Dendritic cell treated with granulocyte-macrophage colony-stimulating factor and Interleukin-4, amounts not matched to agents 40 ng/mL and 50 ng/mL, for 4 days (primary cell): ENCODE measurements at regions of chr1 and their contacts with region 1.

Region 1: DNA sequence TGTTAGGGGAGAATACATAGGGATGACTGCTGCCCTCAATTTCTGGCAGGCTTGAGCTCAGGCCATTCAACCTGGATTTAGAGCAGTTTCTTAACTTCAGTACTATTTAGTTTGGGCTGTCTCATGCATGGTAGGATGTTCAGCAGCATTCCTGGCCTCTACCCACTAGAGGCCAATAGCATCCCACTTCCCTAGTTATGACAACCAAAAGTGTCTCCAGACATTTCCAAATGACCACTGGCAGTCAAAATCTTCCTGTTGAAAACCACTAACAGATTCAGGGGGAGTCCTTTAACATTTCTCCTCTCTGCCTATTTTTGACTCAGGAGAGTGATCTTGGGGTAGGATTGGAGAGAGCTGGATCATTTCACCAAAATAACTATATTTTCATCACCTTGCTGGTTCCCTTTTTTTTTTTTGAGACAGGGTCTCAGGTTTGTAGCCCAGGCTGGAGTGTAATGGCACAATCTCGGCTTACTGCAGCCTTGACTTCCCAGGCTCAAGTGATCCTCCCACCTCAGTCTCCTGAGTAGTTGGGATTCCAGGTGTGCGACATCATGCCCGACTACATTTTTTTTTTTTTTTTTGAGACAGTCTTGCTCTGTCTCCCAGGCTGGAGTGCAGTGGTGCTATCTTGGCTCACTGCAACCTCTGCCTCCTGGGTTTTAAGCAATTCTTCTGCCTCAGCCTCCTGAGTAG is 8.7 kb downstream of the GNAT2 start:
- H3K4me3 Mint-ChIP-seq: no peak overlapping the region
- H3K27ac Mint-ChIP-seq: no peak overlapping the region
- H3K4me1 Mint-ChIP-seq: peaks cover 81% of the 10 kb centered on the region
- H3K27me3 Mint-ChIP-seq: no peaks in the 10 kb centered on the region

Region 2: DNA sequence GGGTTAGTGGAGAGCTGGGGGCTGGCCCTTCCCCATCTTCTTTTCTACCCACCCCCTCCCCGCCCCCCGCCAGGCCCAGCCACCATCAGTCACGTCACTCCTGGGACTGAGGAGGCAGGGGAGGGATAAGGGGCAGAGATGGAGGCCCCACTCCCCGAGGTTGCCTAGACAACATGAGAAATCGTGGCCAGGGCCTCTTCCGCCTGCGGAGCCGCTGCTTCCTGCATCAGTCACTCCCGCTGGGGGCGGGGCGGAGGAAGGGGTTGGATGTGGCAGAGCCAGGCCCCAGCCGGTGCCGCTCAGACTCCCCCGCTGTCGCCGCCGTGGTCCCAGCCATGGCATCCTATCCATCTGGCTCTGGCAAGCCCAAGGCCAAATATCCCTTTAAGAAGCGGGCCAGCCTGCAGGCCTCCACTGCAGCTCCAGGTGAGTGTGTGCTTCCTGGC is 10.1 kb after region 1 on chr1:
- intact Hi-C with region 1: loop called (anchors 1 kb)
- H3K4me3 Mint-ChIP-seq: peak overlapping the region; percentile 94
- H3K27ac Mint-ChIP-seq: peak overlapping the region; percentile 91
- H3K4me1 Mint-ChIP-seq: peaks cover 94% of the 10 kb centered on the region
- H3K27me3 Mint-ChIP-seq: no peaks in the 10 kb centered on the region

Region 3: DNA sequence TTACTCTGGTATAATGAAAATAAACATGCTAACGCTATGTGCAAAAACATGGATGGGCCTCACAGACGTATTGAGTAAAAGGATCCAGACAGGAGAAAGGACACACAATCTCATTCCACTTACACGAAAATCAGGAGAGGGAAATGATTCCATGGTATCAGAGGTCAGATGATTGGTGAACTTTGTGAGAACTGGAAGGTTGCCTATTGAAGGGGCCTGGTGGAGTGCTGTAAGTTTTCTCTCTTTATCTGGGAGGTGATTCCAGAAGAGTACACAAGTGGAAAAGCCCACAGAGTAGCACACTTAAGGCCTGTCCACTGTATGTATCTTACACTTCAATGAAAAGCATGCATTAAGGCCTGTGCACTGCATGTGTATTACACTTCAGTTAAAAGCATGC is 66.7 kb after region 1 on chr1:
- intact Hi-C with region 1: no loop called
- H3K4me3 Mint-ChIP-seq: no peak overlapping the region
- H3K27ac Mint-ChIP-seq: no peak overlapping the region
- H3K4me1 Mint-ChIP-seq: no peaks in the 10 kb centered on the region
- H3K27me3 Mint-ChIP-seq: no peaks in the 10 kb centered on the region